ENCODE measurements at regions of chr5 and their contacts with region 1.

Region 1: DNA sequence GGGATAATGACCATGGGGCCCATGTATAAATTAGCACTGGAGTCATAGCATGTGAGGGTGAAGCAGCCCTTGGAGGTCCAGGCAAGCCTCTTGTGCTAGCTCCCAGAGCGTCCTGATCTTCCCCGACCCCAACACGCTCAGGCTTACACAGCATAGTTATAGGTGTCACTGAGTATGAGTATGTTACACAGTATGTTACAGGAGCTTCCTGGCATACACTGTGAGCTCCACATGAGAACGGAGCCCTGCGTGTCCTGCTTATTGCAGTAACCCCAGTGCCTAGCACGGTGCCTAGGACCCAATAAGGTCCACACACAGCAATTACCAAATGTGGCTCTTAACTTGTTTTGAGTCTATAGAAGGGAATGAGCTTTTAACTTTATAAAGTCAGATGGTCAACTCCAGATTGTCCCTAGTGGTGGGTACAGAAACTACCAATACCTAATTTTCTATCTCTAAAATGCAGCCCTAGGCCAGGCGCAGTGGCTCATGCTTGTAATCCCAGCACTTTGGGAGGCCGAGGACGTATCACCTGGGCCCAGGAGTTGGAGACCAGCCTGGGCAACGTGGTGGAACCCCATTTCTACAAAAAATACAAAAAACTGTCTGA is 64.1 kb downstream of the PLAC8L1 start:
- DNase-seq: no peak
- CTCF ChIP-seq: no peak

Region 2: GRCh38 chr5:146001544-146002185 is 39.6 kb before region 1 on chr5:
- CTCF ChIA-PET with region 1: no interaction called
- POLR2A ChIA-PET with region 1: no interaction called
- DNase-seq: no peak
- CTCF ChIP-seq: no peak

Region 3: DNA sequence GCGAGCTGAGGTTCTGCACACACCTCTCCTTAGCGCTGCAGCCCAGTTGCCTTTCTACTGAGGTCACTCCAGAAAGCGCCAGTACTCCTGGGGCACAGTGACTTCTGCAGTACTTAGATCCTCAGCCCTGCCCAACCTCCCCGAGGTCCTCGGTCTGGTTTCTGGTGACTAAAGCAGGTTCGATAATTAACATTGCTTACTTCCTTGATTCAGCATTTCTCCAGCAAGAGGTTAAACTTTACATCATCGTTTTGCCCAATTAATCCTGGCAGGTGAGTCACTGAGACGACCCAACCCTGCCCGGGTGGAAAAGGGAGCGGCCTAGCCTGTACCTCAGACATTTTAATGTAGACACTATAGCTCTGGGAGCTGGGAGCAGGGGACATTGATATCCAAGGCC is 13.5 kb before region 1 on chr5:
- CTCF ChIA-PET with region 1: interaction called, 13 read pairs
- POLR2A ChIA-PET with region 1: no interaction called
- DNase-seq: no peak
- CTCF ChIP-seq: no peak

Region 4: GRCh38 chr5:146052780-146053179 is 11.5 kb after region 1 on chr5:
- CTCF ChIA-PET with region 1: interaction called, 22 read pairs
- POLR2A ChIA-PET with region 1: no interaction called
- DNase-seq: no peak
- CTCF ChIP-seq: no peak

Region 5: DNA sequence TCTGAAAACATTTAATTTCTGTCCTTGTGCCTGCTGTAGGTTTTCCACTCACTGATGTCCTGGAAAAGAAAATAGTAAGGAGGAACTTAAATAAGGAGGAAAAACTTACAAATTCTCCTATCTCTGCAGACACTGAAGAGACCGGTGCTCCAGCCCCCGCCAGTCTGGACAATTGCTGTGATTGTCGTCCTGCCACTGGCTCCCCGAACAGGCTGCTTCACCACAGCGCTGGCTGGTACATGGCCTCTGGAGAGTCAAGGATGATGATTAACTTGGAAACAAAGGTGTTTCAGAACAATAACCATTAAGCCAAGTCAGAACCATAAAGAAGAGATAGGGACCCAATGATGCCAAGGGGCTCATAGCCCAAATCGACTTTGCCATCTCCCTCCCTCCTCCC is 56.8 kb after region 1 on chr5:
- CTCF ChIA-PET with region 1: no interaction called
- POLR2A ChIA-PET with region 1: no interaction called
- DNase-seq: no peak
- CTCF ChIP-seq: no peak

Measured in GM10248 (cell line).